Activated CD4-positive, alpha-beta memory T cell treated with anti-CD3 and anti-CD28 coated beads, Interleukin-2, amount 10 ng/mL, durations not matched to agents 7 days and 5 days (primary cell): ENCODE measurements at regions of chr17 and their contacts with region 1.

Region 1: GRCh38 chr17:62109378-62109902 is 44.4 kb upstream of the MED13 start:
- DNase-seq: peak; percentile 76
- H3K4me3 Mint-ChIP-seq: no peak overlapping the region
- H3K27ac Mint-ChIP-seq: no peak overlapping the region
- H3K4me1 Mint-ChIP-seq: peaks cover 3% of the 10 kb centered on the region
- H3K27me3 Mint-ChIP-seq: peaks cover 3% of the 10 kb centered on the region

Region 2: GRCh38 chr17:61635913-61636432 is 473.5 kb before region 1 on chr17:
- CTCF ChIA-PET with region 1: interaction called, 13 read pairs
- POLR2A ChIA-PET with region 1: no interaction called
- DNase-seq: peak; percentile 66
- H3K4me3 Mint-ChIP-seq: no peak overlapping the region
- H3K27ac Mint-ChIP-seq: no peak overlapping the region
- H3K4me1 Mint-ChIP-seq: no peaks in the 10 kb centered on the region
- H3K27me3 Mint-ChIP-seq: peaks cover 66% of the 10 kb centered on the region

Region 3: DNA sequence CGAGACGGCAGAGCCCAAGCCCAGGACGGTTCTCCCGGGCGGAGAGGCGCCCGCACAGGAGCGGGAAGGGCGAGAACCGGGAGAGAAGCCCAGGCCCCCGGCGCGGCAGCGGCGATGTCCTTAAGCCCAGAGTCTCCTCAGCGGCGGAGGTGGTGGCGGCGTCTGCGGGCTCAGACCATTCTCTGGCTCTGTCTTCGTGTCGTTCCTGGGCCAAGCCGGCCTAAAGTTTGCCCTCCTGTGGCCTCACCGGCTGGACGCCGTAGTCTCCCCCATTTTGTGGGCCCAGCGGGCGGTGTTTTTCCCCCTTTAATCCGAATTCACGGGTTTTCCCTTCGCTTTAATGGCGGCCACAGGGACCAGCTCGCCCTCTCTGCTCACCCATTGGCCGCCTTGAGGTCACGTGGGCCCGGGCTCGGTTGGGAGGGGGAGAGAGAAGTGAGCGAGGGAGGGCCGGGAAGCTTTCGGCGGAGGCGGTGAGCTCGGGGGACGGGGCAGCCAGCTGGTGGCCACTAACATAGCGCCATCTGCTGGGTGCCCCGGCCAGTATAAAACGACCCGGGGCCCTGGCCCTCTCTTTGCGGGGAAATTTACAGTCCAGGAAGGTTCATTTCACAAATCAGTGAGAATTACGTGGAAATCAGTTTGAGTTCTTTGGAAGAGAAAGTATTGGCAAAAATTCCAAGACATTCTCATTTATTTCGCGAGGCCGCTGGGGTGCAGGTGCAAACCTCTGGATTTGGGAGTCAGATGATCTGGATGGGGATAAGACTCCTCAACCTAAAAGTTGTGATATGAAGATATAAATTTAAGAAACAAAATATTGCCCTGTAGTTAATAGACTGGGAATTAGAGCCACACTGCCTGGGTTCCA is 43.6 kb before region 1 on chr17:
- CTCF ChIA-PET with region 1: interaction called, 26 read pairs
- POLR2A ChIA-PET with region 1: interaction called, 4 read pairs
- DNase-seq: peak; percentile 99
- H3K4me3 Mint-ChIP-seq: peak overlapping the region; percentile 91
- H3K27ac Mint-ChIP-seq: peak overlapping the region; percentile 96
- H3K4me1 Mint-ChIP-seq: peaks cover 35% of the 10 kb centered on the region
- H3K27me3 Mint-ChIP-seq: no peaks in the 10 kb centered on the region

Region 4: DNA sequence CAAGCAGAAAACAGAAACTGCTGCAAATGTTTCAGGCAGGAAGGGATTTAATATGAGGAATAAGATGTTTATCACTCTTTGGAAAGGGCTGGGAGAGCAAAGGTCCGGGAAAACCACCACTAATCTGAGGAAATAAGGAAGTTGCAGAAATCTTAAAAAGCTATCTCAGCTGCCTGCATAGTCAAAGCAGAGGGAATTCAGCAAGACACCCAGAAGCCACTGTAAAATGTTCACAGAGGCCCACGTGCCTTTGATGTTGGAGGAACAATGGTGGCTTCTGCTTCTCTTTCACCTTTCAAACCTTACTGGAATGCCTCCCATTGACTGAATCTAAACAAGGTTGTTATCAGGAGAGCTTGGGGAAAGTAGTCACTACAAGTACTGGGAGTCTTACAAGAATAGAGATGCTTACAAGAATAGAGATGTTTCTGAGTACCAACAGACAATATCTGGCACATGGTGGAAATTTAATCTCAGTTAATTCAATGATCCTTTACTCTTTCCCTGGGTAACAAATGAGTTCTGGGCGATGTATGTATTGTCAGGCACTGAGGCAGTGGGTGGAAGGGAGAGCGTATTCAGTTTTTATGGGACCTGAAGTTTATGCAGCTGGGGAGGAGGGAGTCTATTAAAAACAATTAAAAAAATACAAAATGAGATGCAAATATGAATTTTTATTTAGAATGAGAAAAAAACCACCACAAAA is 11.7 kb after region 1 on chr17:
- CTCF ChIA-PET with region 1: interaction called, 10 read pairs
- POLR2A ChIA-PET with region 1: interaction called, 3 read pairs
- DNase-seq: no peak
- H3K4me3 Mint-ChIP-seq: no peak overlapping the region
- H3K27ac Mint-ChIP-seq: peak overlapping the region; percentile 56
- H3K4me1 Mint-ChIP-seq: peaks cover 36% of the 10 kb centered on the region
- H3K27me3 Mint-ChIP-seq: peaks cover 7% of the 10 kb centered on the region

Region 5: GRCh38 chr17:62179534-62180151 is 70.2 kb after region 1 on chr17:
- CTCF ChIA-PET with region 1: no interaction called
- POLR2A ChIA-PET with region 1: no interaction called
- DNase-seq: no peak
- H3K4me3 Mint-ChIP-seq: no peak overlapping the region
- H3K27ac Mint-ChIP-seq: no peak overlapping the region
- H3K4me1 Mint-ChIP-seq: no peaks in the 10 kb centered on the region
- H3K27me3 Mint-ChIP-seq: no peaks in the 10 kb centered on the region